CD14-positive monocyte (primary cell): ENCODE measurements at regions of chr20 and their contacts with region 1.

Region 1: DNA sequence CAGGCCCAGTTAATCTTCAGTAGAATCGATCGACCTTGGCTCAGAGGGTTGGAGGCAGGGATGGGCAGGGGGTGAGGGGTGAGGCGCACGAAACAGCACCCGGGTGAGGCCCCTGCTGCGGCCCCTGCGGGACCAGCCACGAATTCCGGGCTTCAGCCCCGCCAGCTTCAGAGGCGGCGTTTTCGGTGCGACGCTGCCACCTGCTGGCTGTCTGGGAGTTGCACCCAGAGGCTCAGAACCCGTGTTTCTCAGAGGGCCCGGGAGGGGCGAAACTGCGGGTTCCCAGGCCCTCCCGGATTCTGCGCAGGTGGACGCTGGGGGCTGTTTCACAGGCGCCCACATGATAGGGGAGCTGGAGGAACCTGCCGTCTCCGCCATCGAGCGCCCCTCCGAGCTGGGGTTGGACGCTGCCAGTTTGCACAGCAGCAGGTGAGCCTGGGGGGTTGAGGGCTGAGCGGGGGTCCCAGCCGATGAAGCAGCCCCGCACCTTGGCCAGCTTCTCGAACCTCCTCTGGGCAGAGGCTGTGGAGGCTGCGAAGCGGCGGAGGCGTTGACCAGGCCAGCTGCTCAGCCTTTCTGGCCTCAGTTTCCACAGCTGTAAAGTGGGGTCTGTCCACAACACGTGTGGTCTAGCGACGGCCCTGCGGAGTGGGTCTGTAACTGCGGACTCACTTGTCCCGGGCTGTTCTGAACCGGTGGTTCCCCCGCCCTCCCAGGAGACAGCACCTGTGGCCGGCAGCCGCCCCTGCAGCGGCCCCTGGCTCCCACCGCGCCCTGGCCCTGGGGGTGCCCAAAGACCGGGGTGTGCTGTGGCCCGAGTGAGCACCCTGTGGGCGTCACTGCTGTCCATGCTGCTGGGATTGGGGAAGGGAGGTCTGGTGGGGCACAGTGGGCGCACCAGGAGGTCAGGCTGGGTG is 2.5 kb upstream of the BHLHE23 start:
- DNase-seq: peak; percentile 58 to 71 (median 69)
- H3K4me3 ChIP-seq: no peak overlapping the region
- H3K4me3 Mint-ChIP-seq: peak overlapping the region in 1 of 2 donors; percentile 74
- H3K27ac ChIP-seq: no peak overlapping the region
- H3K27ac Mint-ChIP-seq: no peak overlapping the region
- H3K4me1 ChIP-seq: peaks cover 5 to 11% of the 10 kb centered on the region in 2 donors
- H3K4me1 Mint-ChIP-seq: peaks cover 5% of the 10 kb centered on the region
- H3K27me3 ChIP-seq: peaks cover 63 to 91% of the 10 kb centered on the region in 2 donors
- H3K27me3 Mint-ChIP-seq: peaks cover 77 to 98% (median 91%) of the 10 kb centered on the region in 3 donors
- CTCF ChIP-seq: peak; percentile 97

Region 2: DNA sequence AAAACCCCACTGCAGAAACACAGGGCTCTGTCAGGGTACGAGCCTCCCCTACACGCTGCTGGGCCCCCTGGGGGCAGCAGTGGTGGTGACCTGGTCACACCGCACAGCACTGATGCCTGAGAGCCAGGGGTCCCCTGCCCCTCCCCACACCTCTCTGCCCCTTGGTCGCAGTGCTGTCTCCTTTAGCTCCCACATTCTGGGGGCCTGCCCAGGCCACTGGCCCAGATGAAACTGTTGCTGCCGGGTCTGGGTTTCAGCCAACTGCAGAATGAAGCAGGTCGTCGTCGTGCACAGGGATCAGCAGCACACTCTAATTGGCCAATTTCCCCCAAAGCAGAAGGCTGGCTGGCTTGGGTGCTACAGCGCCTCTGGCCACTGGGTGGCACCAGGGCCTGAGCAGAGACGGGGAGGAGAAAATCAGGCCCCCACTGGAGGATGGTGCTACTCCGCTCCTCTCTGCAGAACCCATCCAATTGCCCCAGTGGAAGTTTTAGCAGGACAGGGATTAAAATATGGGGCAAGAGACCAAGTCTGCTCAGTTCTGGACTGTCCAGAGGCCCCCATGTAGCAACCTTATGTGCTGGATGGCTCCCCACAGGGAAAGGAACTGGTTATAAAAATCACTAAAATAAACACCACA is 109.1 kb before region 1 on chr20:
- intact Hi-C with region 1: loop called (anchors 1 to 2 kb)
- DNase-seq: peak; percentile 48 to 65 (median 57)
- H3K4me3 ChIP-seq: no peak overlapping the region
- H3K4me3 Mint-ChIP-seq: no peak overlapping the region
- H3K27ac ChIP-seq: peak overlapping the region in 1 of 2 donors; percentile 32
- H3K27ac Mint-ChIP-seq: peak overlapping the region in 3 of 7 donors; percentile 26 to 75 (median 56)
- H3K4me1 ChIP-seq: peaks cover 0 to 7% of the 10 kb centered on the region in 2 donors
- H3K4me1 Mint-ChIP-seq: peaks cover 9% of the 10 kb centered on the region
- H3K27me3 ChIP-seq: no peaks in the 10 kb centered on the region
- H3K27me3 Mint-ChIP-seq: peaks cover 0 to 5% (median 1%) of the 10 kb centered on the region in 3 donors
- CTCF ChIP-seq: peak; percentile 91

Region 3: GRCh38 chr20:62972270-62973032 is 36.9 kb before region 1 on chr20:
- intact Hi-C with region 1: loop called (anchors 1 kb)
- DNase-seq: peak; percentile 77 to 82 (median 79)
- H3K4me3 ChIP-seq: peak overlapping the region in 1 of 3 experiments; percentile 38
- H3K4me3 Mint-ChIP-seq: peak overlapping the region; percentile 67 to 89
- H3K27ac ChIP-seq: no peak overlapping the region
- H3K27ac Mint-ChIP-seq: peak overlapping the region in 1 of 7 donors; percentile 38
- H3K4me1 ChIP-seq: peaks cover 8 to 10% of the 10 kb centered on the region in 2 donors
- H3K4me1 Mint-ChIP-seq: peaks cover 11% of the 10 kb centered on the region
- H3K27me3 ChIP-seq: peaks cover 14 to 66% of the 10 kb centered on the region in 2 donors
- H3K27me3 Mint-ChIP-seq: peaks cover 62 to 80% (median 73%) of the 10 kb centered on the region in 3 donors
- CTCF ChIP-seq: peak; percentile 72